HEK293T (cell line): ENCODE measurements at regions of chr2 and their contacts with region 1.

Region 1: DNA sequence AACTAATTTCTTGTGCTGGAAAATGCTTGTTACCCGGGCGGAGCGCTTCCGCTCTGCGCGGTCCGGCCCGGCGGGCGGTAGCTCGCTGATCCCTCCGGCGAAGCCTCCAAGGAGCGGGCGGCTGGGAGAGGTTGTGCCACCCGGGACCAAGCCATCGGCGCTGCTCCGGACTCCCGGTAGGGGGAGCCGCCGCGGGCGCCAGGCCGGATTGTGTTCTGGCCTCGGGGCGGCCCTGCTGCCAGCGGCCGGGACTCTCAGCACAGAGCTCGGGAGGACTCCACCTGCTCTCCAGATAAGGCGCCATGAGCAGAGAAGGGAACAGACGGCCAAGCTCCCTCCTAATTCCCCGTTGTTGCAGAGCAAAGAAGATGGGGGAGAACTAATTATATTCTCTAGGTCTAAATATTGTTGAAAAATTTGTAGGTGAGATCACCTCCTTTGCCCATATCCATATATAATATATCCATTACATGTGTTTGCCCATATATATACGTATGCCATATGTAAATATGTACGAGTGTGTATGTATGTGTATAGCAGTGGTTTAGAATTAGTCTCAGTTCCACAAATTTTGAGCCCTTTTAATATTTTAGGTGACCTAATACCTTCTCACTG is 13.8 kb upstream of the SATB2 start:
- DNase-seq: peak; percentile 88

Region 2: DNA sequence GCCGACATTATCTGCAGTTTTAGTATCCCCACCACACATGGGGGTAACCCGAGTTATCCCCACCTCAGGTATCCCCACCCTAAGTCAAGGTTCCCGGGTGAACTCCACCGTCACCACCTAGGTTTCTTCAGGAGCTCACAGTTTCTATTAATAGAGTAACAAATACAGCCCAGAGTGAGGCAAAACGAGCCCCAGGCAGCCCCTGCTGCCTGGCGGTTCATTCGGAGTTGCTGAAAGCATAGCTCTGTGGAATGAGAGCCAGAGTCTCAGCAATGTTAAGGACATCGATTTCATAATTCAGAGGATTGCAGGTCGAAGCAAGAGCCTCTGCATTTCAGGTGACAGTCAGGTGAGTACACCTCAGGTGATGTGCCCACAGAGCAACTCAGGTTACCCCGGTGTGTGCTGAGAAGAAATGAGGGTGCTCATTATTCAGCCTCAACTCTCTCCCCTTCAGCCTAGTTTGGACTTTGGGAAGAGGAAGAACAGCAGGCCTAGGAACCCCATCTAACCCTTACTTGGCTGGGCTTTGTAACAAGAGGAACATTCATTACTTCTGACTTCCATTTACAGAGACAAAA is 24.5 kb before region 1 on chr2:
- CTCF ChIA-PET with region 1: no interaction called
- POLR2A ChIA-PET with region 1: no interaction called
- DNase-seq: no peak

Region 3: GRCh38 chr2:199459286-199460016 is 12.1 kb before region 1 on chr2:
- CTCF ChIA-PET with region 1: interaction called, 4 read pairs
- POLR2A ChIA-PET with region 1: interaction called, 11 read pairs
- DNase-seq: peak; percentile 60

Region 4: DNA sequence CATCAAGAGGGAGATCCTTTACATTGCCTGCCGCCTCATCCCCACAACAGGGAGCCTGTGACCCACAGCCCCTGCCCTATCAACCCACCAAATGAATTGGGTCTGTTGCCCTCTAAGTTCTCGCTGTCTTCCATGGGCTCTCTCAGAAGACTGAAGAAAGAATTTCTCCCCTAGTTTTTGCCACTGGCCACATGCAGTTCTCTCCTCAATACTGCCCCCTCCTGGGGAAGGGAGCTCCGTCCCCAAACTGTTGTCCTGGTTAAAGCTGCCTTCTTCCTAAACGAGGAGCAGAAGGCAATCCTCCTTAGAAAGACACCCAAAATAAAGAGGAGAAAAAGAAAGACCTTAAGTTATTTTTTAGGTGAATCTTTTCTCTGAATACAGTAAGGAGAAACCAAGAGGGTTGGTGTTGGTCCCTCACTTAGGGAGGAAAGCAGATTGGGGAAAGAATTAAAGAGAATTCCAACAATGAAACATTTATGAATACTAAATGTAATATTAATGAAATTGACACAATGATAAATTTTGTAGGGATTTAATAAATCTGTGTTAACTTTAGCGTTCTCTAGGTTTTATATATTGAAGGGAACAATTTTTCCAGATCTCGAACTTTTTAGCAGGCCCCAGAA is 17.3 kb after region 1 on chr2:
- CTCF ChIA-PET with region 1: interaction called, 13 read pairs
- POLR2A ChIA-PET with region 1: no interaction called
- DNase-seq: peak; percentile 74

Region 5: DNA sequence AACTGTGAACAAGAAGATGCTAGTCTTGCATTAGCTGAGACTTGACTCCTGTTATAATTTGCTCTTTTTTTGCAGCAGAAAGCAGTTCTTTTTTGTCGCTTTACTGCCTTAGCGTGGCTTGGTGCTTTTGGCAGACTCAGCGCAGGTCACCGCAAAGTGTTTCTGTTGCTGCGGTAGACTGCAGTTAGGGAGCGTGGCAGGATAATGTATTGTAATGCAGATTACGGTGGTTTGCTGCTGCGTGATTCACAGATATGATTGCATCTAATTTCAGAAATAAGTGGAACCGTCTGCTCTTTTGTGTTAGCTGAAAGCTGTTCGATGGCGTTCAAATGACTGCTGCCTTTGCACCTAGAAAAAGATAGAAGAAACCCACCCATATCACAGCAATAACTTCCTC is 117.8 kb after region 1 on chr2:
- CTCF ChIA-PET with region 1: no interaction called
- POLR2A ChIA-PET with region 1: no interaction called
- DNase-seq: peak; percentile 39

Region 6: DNA sequence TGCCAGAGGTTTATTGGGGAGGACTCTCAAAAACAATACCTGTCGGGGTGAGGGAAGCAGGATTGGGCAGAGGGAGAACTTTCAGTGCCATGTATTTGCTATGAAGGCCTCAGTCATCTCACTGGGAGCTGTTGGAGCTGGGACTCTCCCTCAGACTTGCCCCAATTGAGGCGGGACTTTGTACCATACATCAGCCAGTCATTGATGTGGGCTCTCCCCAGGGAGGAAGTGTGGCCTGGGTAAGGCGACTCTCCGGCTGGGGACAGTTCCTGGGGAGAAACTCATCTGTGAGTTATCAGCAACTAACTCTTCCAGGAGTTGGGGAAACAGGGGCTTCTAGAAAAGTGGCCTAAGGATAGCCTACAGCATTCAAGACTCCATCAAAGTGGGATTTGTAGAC is 313.0 kb after region 1 on chr2:
- CTCF ChIA-PET with region 1: no interaction called
- POLR2A ChIA-PET with region 1: no interaction called
- DNase-seq: no peak